Panc1 (cell line): ENCODE measurements at regions of chr1 and their contacts with region 1.

Region 1: GRCh38 chr1:11320153-11320936 is 47.3 kb downstream of the UBIAD1 start:
- DNase-seq: peak; percentile 4
- ATAC-seq: peak; percentile 45
- H3K4me3 ChIP-seq: no peak overlapping the region
- H3K27ac ChIP-seq: no peak overlapping the region
- H3K4me1 ChIP-seq: no peaks in the 10 kb centered on the region
- H3K27me3 ChIP-seq: no peaks in the 10 kb centered on the region
- CTCF ChIP-seq: peak; percentile 88; the same call in 1 of the 2 replicates

Region 2: GRCh38 chr1:11059990-11060830 is 260.1 kb before region 1 on chr1 and contains the start of gene SRM:
- CTCF ChIA-PET with region 1: no interaction called
- POLR2A ChIA-PET with region 1: interaction called, 14 read pairs
- in situ Hi-C with region 1: no loop called
- intact Hi-C with region 1: no loop called
- DNase-seq: no peak
- ATAC-seq: peak; percentile 96
- H3K4me3 ChIP-seq: peak within 1 kb of the TSS; percentile 82 to 84
- H3K27ac ChIP-seq: peak within 1 kb of the TSS; percentile 89
- H3K4me1 ChIP-seq: peaks cover 15% of the 10 kb centered on the region
- H3K27me3 ChIP-seq: no peaks in the 10 kb centered on the region
- CTCF ChIP-seq: no peak
- total RNA-seq, gene SRM: 249 TPM

Region 3: GRCh38 chr1:11072216-11072917 is 248.0 kb before region 1 on chr1:
- CTCF ChIA-PET with region 1: no interaction called
- POLR2A ChIA-PET with region 1: interaction called, 13 read pairs
- in situ Hi-C with region 1: no loop called
- intact Hi-C with region 1: no loop called
- DNase-seq: no peak
- ATAC-seq: no peak
- H3K4me3 ChIP-seq: no peak overlapping the region
- H3K27ac ChIP-seq: no peak overlapping the region
- H3K4me1 ChIP-seq: no peaks in the 10 kb centered on the region
- H3K27me3 ChIP-seq: no peaks in the 10 kb centered on the region
- CTCF ChIP-seq: no peak

Region 4: GRCh38 chr1:11301601-11302000 is 18.7 kb before region 1 on chr1:
- CTCF ChIA-PET with region 1: no interaction called
- POLR2A ChIA-PET with region 1: no interaction called
- in situ Hi-C with region 1: no loop called
- intact Hi-C with region 1: no loop called
- DNase-seq: no peak
- ATAC-seq: no peak
- H3K4me3 ChIP-seq: no peak overlapping the region
- H3K27ac ChIP-seq: no peak overlapping the region
- H3K4me1 ChIP-seq: no peaks in the 10 kb centered on the region
- H3K27me3 ChIP-seq: no peaks in the 10 kb centered on the region
- CTCF ChIP-seq: no peak

Region 5: DNA sequence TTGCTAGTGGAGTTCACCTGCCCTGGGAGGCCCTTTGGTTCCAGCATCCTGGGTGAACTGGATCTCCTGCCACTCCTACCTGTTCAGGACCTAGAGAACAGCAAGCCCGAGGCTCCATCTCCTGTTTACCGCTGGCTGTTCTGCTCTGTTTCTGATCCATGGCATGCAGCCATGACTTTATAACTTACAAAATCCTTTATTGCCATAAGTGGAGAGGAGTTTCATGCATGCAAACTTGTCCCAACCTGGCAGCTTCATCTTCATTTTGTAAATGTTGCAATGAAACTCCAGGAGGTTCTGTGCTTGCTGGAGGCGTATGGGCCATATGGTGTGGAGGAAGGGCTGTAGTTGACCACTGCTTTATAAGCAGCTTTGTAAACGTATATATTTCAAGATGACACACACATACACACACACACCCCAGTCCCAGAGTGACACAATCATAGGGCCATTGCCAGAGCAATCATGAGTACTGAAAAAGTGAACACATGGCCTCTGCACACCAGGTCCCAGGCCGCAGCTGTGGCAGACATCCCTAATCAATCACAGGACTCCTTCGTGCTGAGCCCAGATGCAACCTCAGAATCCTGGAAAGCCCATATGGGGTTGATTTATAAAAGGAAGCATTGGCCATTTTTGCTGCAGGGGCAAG is 21.7 kb after region 1 on chr1:
- CTCF ChIA-PET with region 1: no interaction called
- POLR2A ChIA-PET with region 1: no interaction called
- in situ Hi-C with region 1: no loop called
- intact Hi-C with region 1: no loop called
- DNase-seq: no peak
- ATAC-seq: no peak
- H3K4me3 ChIP-seq: no peak overlapping the region
- H3K27ac ChIP-seq: no peak overlapping the region
- H3K4me1 ChIP-seq: no peaks in the 10 kb centered on the region
- H3K27me3 ChIP-seq: no peaks in the 10 kb centered on the region
- CTCF ChIP-seq: no peak